ENCODE measurements at regions of chr12 and their contacts with region 1.

Region 1: GRCh38 chr12:104478396-104479122 is 21.8 kb downstream of the CHST11 start:
- DNase-seq: peak; percentile 80
- ATAC-seq: peak; percentile 88
- H3K4me3 ChIP-seq: peak overlapping the region; percentile 73
- H3K27ac ChIP-seq: peak overlapping the region; percentile 94
- H3K4me1 ChIP-seq: peaks cover 37% of the 10 kb centered on the region
- H3K27me3 ChIP-seq: no peaks in the 10 kb centered on the region
- CTCF ChIP-seq: no peak
- EP300 ChIP-seq: peak; percentile 17 to 81; a peak in 2 of 4 replicates
- POLR2A ChIP-seq: peak; percentile 65
- RAD21 ChIP-seq: peak; percentile 21; the same call in 1 of the 2 replicates

Region 2: GRCh38 chr12:104462931-104463339 is 15.6 kb before region 1 on chr12:
- CTCF ChIA-PET with region 1: interaction called, 16 read pairs
- POLR2A ChIA-PET with region 1: interaction called, 64 read pairs
- RAD21 ChIA-PET with region 1: interaction called, 90 read pairs
- SMC1A ChIA-PET with region 1: interaction called, 73 read pairs
- in situ Hi-C with region 1: no loop called
- intact Hi-C with region 1: loop called (anchors 2 kb)
- DNase-seq: peak; percentile 88
- ATAC-seq: peak; percentile 52
- H3K4me3 ChIP-seq: peak overlapping the region; percentile 53
- H3K27ac ChIP-seq: peak overlapping the region; percentile 80
- H3K4me1 ChIP-seq: peaks cover 50% of the 10 kb centered on the region
- H3K27me3 ChIP-seq: no peaks in the 10 kb centered on the region
- CTCF ChIP-seq: no peak
- EP300 ChIP-seq: peak; percentile 25 to 85; a peak in 3 of 4 replicates
- POLR2A ChIP-seq: no peak
- RAD21 ChIP-seq: no peak

Region 3: GRCh38 chr12:104494137-104494792 is 15.7 kb after region 1 on chr12:
- CTCF ChIA-PET with region 1: interaction called, 8 read pairs
- POLR2A ChIA-PET with region 1: interaction called, 8 read pairs
- RAD21 ChIA-PET with region 1: interaction called, 20 read pairs
- SMC1A ChIA-PET with region 1: interaction called, 33 read pairs
- in situ Hi-C with region 1: no loop called
- intact Hi-C with region 1: no loop called
- DNase-seq: peak; percentile 57
- ATAC-seq: peak; percentile 77
- H3K4me3 ChIP-seq: peak overlapping the region; percentile 57
- H3K27ac ChIP-seq: peak overlapping the region; percentile 83
- H3K4me1 ChIP-seq: peaks cover 52% of the 10 kb centered on the region
- H3K27me3 ChIP-seq: no peaks in the 10 kb centered on the region
- CTCF ChIP-seq: no peak
- EP300 ChIP-seq: peak in 1 of 2 experiments; percentile 16; a peak in 1 of 4 replicates
- POLR2A ChIP-seq: peak; percentile 50
- RAD21 ChIP-seq: no peak

Region 4: GRCh38 chr12:104589991-104590390 is 111.4 kb after region 1 on chr12:
- CTCF ChIA-PET with region 1: no interaction called
- POLR2A ChIA-PET with region 1: no interaction called
- RAD21 ChIA-PET with region 1: no interaction called
- SMC1A ChIA-PET with region 1: no interaction called
- in situ Hi-C with region 1: no loop called
- intact Hi-C with region 1: no loop called
- DNase-seq: no peak
- ATAC-seq: no peak
- H3K4me3 ChIP-seq: no peak overlapping the region
- H3K27ac ChIP-seq: no peak overlapping the region
- H3K4me1 ChIP-seq: peaks cover 7% of the 10 kb centered on the region; the same call in 1 of the 2 replicates
- H3K27me3 ChIP-seq: no peaks in the 10 kb centered on the region
- CTCF ChIP-seq: no peak
- EP300 ChIP-seq: no peak
- POLR2A ChIP-seq: no peak
- RAD21 ChIP-seq: no peak

Region 5: GRCh38 chr12:104604070-104604994 is 125.8 kb after region 1 on chr12:
- CTCF ChIA-PET with region 1: interaction called, 3 read pairs
- POLR2A ChIA-PET with region 1: no interaction called
- RAD21 ChIA-PET with region 1: interaction called, 6 read pairs
- SMC1A ChIA-PET with region 1: interaction called, 14 read pairs
- in situ Hi-C with region 1: no loop called
- intact Hi-C with region 1: no loop called
- DNase-seq: peak; percentile 86
- ATAC-seq: peak; percentile 90
- H3K4me3 ChIP-seq: no peak overlapping the region
- H3K27ac ChIP-seq: peak overlapping the region; percentile 87
- H3K4me1 ChIP-seq: peaks cover 34% of the 10 kb centered on the region
- H3K27me3 ChIP-seq: no peaks in the 10 kb centered on the region
- CTCF ChIP-seq: 0 out of 6 replicates have a peak, but pooled peaks of 1 of the 3 experiments have one; percentile 4
- EP300 ChIP-seq: peak; percentile 36 to 60; a peak in 1 of 4 replicates
- POLR2A ChIP-seq: no peak
- RAD21 ChIP-seq: peak; percentile 32

Region 6: DNA sequence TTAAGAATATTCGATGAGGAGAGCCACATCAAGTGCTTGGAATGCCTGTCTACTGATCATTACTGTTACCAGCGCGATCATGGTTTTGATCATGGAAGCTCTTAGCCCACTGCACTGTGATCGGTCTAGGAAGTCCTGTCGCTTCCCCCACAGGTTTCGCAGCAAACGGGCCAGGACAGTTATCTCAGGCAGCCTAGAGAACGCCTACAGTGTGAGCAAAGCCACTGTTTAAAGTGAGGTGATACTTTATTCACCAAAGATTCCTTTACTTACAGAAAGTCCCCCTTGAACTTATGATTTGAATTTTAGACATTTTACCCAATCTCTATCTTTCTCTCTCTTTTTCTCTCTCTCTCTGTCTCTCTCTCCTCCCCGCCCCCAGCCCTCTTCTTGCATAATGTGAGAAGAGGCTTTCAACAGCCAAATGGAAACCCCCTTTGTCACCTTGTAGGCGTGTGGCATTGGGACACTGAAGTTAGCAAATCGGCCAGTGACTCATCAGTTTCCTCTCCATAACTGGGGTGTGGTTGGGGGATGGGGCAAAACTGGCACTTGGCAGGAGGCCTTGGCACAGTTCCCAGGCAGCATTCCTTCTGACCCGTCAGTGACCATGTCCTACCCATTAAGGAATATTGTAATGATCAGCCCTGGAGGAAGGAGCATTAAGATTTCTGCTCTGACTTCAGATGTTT is 193.0 kb after region 1 on chr12:
- CTCF ChIA-PET with region 1: no interaction called
- POLR2A ChIA-PET with region 1: interaction called, 3 read pairs
- RAD21 ChIA-PET with region 1: interaction called, 8 read pairs
- SMC1A ChIA-PET with region 1: interaction called, 11 read pairs
- in situ Hi-C with region 1: no loop called
- intact Hi-C with region 1: no loop called
- DNase-seq: peak; percentile 88
- ATAC-seq: peak; percentile 86
- H3K4me3 ChIP-seq: peak overlapping the region; percentile 49
- H3K27ac ChIP-seq: peak overlapping the region; percentile 99
- H3K4me1 ChIP-seq: peaks cover 55% of the 10 kb centered on the region
- H3K27me3 ChIP-seq: no peaks in the 10 kb centered on the region
- CTCF ChIP-seq: no peak
- EP300 ChIP-seq: peak; percentile 84 to 95; a peak in 3 of 4 replicates
- POLR2A ChIP-seq: peak; percentile 73
- RAD21 ChIP-seq: peak; percentile 48